Lower leg skin (tissue), 4 donors: ENCODE measurements at regions of chr1 and their contacts with region 1.

Region 1: GRCh38 chr1:233520261-233521191 is 93.4 kb upstream of the KCNK1 start:
- DNase-seq: no peak
- H3K4me3 ChIP-seq: no peak overlapping the region
- CTCF ChIP-seq: no peak
- POLR2A ChIP-seq: no peak

Region 2: DNA sequence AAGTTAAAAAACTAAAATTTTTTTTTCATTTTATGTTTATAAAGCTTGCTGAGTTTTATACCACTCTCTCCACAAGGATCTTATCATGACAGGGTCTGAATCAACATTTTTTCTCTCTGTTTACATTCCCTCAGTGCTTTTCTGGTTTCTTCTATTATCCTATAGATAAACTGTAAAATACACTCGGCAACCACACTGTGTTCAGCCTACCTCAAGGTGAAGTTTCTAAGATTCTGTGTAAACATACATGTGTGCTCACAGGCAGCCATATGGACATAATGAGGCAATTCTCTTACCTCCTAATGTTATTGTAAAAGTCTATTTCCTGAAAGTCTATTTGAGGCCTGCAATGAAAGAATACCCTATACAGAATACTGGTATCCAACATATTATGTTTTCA is 455.5 kb before region 1 on chr1:
- intact Hi-C with region 1: loop called (anchors 5 kb)
- DNase-seq: no peak
- H3K4me3 ChIP-seq: no peak overlapping the region
- CTCF ChIP-seq: no peak
- POLR2A ChIP-seq: no peak

Region 3: DNA sequence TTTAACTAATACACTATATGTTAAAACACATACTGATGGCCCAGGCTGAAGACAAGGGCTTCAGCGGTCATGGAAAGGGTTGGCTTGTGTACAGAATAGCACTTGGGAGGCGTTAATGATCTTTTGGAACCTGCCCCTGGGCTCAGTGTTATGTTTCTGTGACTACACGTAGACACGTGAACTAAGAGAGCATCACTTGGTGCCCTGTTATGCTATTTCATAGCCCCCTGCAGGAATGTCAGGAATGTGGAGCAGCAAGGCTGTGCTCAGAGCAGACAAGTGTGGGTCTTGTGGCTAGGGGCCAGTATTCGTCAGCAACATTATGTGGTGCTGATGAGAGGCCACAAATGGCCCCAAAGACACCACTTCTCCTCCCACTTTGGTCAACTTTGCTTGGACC is 60.6 kb before region 1 on chr1:
- intact Hi-C with region 1: no loop called
- DNase-seq: no peak
- H3K4me3 ChIP-seq: no peak overlapping the region
- CTCF ChIP-seq: no peak
- POLR2A ChIP-seq: no peak